ENCODE measurements at regions of chr15 and their contacts with region 1.

Region 1: GRCh38 chr15:58684036-58684710 is 65.3 kb downstream of the ADAM10 start:
- DNase-seq: no peak
- ATAC-seq: no peak
- H3K4me3 ChIP-seq: no peak overlapping the region
- H3K4me3 Mint-ChIP-seq: no peak overlapping the region
- H3K27ac ChIP-seq: no peak overlapping the region
- H3K27ac Mint-ChIP-seq: no peak overlapping the region
- H3K4me1 ChIP-seq: peaks cover 2% of the 10 kb centered on the region
- H3K4me1 Mint-ChIP-seq: peaks cover 39% of the 10 kb centered on the region
- H3K27me3 ChIP-seq: no peaks in the 10 kb centered on the region
- H3K27me3 Mint-ChIP-seq: no peaks in the 10 kb centered on the region
- CTCF ChIP-seq: no peak

Region 2: DNA sequence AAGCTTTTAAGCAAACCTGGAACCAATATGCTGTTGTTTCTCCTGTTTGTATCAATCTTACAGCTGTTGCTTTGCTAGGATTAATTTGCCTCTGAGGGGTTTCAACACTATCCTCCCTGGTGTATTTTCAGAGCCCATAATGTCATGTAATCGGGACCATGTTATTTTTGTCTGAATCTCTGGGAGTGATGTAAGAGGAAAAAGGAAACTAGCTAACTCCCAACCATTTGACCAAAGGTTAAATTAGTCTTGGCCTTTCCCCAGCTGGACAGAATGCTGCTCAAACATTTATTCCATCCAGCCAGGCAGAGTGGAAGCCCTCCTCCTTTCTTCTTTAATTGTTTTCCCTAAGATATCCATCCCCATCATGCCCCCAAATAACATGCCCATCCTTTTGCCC is 760.9 kb before region 1 on chr15:
- CTCF ChIA-PET with region 1: no interaction called
- POLR2A ChIA-PET with region 1: no interaction called
- intact Hi-C with region 1: no loop called
- DNase-seq: no peak
- ATAC-seq: no peak
- H3K4me3 ChIP-seq: no peak overlapping the region
- H3K4me3 Mint-ChIP-seq: no peak overlapping the region
- H3K27ac ChIP-seq: no peak overlapping the region
- H3K27ac Mint-ChIP-seq: no peak overlapping the region
- H3K4me1 ChIP-seq: no peaks in the 10 kb centered on the region
- H3K4me1 Mint-ChIP-seq: no peaks in the 10 kb centered on the region
- H3K27me3 ChIP-seq: no peaks in the 10 kb centered on the region
- H3K27me3 Mint-ChIP-seq: peaks cover 8% of the 10 kb centered on the region
- CTCF ChIP-seq: no peak

Region 3: GRCh38 chr15:58585693-58586443 is 98.3 kb before region 1 on chr15:
- CTCF ChIA-PET with region 1: no interaction called
- POLR2A ChIA-PET with region 1: no interaction called
- intact Hi-C with region 1: no loop called
- DNase-seq: no peak
- ATAC-seq: no peak
- H3K4me3 ChIP-seq: no peak overlapping the region
- H3K4me3 Mint-ChIP-seq: no peak overlapping the region
- H3K27ac ChIP-seq: no peak overlapping the region
- H3K27ac Mint-ChIP-seq: no peak overlapping the region
- H3K4me1 ChIP-seq: no peaks in the 10 kb centered on the region
- H3K4me1 Mint-ChIP-seq: peaks cover 13% of the 10 kb centered on the region
- H3K27me3 ChIP-seq: no peaks in the 10 kb centered on the region
- H3K27me3 Mint-ChIP-seq: peaks cover 8% of the 10 kb centered on the region
- CTCF ChIP-seq: no peak

Region 4: GRCh38 chr15:59516655-59517461 is 832.7 kb after region 1 on chr15:
- CTCF ChIA-PET with region 1: no interaction called
- POLR2A ChIA-PET with region 1: no interaction called
- intact Hi-C with region 1: loop called in 1 of 2 experiments (anchors 5 kb)
- DNase-seq: no peak
- ATAC-seq: no peak
- H3K4me3 ChIP-seq: no peak overlapping the region
- H3K4me3 Mint-ChIP-seq: no peak overlapping the region
- H3K27ac ChIP-seq: no peak overlapping the region
- H3K27ac Mint-ChIP-seq: no peak overlapping the region
- H3K4me1 ChIP-seq: no peaks in the 10 kb centered on the region
- H3K4me1 Mint-ChIP-seq: peaks cover 16% of the 10 kb centered on the region
- H3K27me3 ChIP-seq: peaks cover 0 to 3% of the 10 kb centered on the region in 2 experiments
- H3K27me3 Mint-ChIP-seq: peaks cover 3% of the 10 kb centered on the region
- CTCF ChIP-seq: no peak

Measured in CD8-positive, alpha-beta T cell (primary cell).